ENCODE measurements at regions of chr14 and their contacts with region 1.

Region 1: DNA sequence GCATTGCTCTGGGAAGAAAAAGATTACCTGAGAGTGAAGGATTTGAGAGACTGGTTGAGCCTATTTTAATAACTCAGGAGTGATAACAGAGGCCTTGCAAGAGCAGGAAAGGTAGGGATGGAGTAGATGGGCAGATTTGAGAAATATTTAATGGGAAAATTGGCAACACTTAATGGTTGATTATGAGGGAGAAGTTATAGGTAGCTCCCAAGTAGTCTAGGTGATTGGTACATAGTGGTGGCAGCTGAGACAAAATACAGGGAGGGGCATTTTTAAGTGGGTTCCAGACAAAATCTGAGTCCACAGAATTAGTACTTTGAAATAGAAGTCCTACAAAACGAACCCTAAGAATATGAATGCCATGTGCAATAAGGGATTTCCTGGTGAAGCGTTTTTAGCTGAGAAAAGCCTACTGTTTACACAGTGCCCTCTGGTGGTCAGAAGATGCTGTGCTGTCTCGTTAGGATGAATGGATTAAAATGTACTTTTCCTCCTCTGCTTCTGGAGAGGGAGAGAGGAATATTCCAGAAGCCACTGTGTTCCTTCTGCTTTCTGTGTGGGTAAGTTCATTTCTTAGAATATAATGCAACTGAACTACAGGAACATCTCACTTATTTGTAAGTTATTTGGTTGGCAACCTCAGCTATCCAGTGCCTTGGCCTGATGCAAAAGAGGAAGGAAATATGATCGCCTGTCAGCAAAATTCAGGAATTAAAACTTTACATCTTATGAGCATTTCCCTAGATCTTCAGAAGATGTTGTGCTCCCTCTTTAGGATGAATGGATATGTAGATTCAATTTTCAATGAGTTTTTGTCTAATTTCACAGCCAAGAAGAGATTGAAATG is 6.5 kb downstream of the ZBTB1 start:
- DNase-seq: peak; percentile 34
- H3K4me3 ChIP-seq: no peak overlapping the region
- H3K27ac ChIP-seq: no peak overlapping the region
- H3K27me3 ChIP-seq: no peaks in the 10 kb centered on the region
- CTCF ChIP-seq: peak; percentile 88

Region 2: GRCh38 chr14:64159588-64159987 is 351.5 kb before region 1 on chr14:
- CTCF ChIA-PET with region 1: no interaction called
- POLR2A ChIA-PET with region 1: no interaction called
- DNase-seq: no peak
- H3K4me3 ChIP-seq: no peak overlapping the region
- H3K27ac ChIP-seq: no peak overlapping the region
- H3K27me3 ChIP-seq: no peaks in the 10 kb centered on the region
- CTCF ChIP-seq: no peak

Region 3: GRCh38 chr14:64338616-64339316 is 172.3 kb before region 1 on chr14:
- CTCF ChIA-PET with region 1: interaction called, 15 read pairs
- POLR2A ChIA-PET with region 1: no interaction called
- DNase-seq: peak; percentile 95
- H3K4me3 ChIP-seq: peak overlapping the region; percentile 80
- H3K27ac ChIP-seq: peak overlapping the region; percentile 70
- H3K27me3 ChIP-seq: no peaks in the 10 kb centered on the region
- CTCF ChIP-seq: no peak

Region 4: DNA sequence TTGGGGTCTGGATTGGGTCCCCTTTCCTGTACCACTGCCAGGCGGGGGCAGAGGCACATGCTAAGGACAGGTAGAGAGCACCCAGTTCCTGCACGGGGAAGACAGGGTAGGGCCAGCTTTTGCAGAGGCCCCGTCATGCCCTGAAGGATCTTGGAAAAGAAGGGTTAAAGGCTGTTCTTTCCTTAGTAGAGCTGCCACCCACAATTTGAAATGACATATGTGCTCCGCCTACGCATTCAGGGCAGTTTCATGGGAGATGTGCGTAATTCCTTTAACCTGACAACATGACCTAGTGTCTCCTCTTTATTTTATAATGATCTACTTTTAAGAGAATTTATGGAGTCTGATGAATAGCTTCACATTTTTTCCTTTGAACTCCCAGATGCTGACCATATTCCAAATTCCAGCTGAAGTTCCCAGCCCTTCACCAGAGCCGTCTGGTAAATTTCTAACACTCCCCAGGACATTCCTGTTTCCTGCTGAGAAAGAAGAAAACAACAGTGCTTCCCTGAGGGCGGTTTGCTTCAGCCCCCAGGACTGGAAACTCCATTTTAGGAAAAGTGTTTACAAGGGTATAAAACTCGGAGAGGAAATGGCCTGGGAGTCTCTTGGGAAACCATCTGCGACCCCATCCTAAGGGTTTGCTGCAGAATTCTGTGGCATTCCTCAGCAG is 134.3 kb after region 1 on chr14:
- CTCF ChIA-PET with region 1: no interaction called
- POLR2A ChIA-PET with region 1: no interaction called
- DNase-seq: peak; percentile 89
- H3K4me3 ChIP-seq: peak overlapping the region; percentile 13; the same call in 1 of the 2 replicates
- H3K27ac ChIP-seq: peak overlapping the region; percentile 98
- H3K27me3 ChIP-seq: no peaks in the 10 kb centered on the region
- CTCF ChIP-seq: no peak

Region 5: DNA sequence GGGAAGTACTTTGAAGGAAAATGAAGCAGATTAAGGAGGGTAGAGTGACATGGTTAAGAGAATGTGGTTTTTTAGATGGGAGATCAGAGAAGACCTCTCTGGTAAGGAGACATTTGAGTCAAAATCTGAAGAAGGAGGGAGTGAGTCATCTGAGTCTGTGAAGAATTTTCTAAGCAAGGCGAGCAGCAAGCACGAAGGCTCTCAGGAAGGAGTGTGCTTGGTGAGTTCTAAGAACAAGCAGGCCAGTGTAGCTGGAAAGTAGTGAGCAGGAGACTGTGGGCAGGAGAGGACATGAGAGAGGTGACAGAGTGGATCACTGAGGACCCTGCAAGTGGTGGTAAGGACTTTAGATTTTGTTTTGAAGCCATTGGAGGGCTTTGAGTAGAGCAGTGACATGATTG is 825.1 kb after region 1 on chr14:
- CTCF ChIA-PET with region 1: no interaction called
- POLR2A ChIA-PET with region 1: no interaction called
- DNase-seq: peak; percentile 34
- H3K4me3 ChIP-seq: no peak overlapping the region
- H3K27ac ChIP-seq: peak overlapping the region; percentile 74
- H3K27me3 ChIP-seq: no peaks in the 10 kb centered on the region
- CTCF ChIP-seq: no peak

Measured in AG04450 (cell line).